A673 (cell line): ENCODE measurements at regions of chr15 and their contacts with region 1.

Region 1: DNA sequence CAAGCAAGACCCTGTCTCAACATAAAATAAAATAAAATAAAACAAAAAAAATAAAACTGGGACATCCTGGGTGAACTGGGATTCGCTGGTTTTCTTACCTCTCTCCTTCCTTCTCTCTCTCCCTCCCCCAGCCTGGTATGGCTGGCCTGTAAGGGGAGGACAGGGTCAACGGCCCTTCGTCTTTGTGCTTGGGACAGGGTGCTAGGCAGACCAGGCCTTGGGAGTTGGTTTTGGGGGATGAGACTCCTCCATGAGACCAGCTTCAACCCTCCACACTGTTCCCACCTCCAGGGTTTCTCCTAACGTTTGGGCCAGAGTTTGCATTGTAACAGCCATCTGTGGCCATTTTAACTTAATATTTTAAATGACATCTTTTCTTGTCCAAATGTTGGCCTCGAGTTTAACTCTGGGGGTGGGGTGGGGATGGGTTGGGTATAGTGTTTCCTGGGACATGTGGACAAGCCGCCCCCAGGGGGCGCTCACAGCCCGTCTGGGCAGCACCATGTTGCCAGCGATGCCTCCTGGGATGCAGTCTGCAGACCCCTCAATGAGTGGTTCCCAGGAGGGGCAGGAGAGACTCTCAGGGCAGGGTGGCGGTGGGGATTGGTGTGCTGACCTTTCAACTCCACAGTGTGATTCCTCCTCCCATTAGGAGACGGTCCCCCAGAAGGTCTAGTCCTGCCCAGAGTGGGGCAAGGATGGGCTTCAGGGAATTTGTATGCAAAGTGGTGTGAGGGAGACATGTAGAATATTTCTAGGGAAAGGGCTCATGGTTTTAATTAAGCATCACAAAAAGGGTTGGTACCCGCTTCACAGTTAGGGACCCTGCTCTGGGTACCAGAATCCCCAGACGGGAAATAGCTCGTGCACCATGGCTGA is 37.7 kb upstream of the LCTL start:
- DNase-seq: peak; percentile 84
- H3K4me3 ChIP-seq: no peak overlapping the region
- H3K27ac ChIP-seq: no peak overlapping the region
- H3K4me1 ChIP-seq: no peaks in the 10 kb centered on the region
- H3K27me3 ChIP-seq: no peaks in the 10 kb centered on the region
- CTCF ChIP-seq: peak; percentile 88

Region 2: GRCh38 chr15:66402761-66403284 is 200.7 kb before region 1 on chr15:
- CTCF ChIA-PET with region 1: interaction called, 10 read pairs
- POLR2A ChIA-PET with region 1: no interaction called
- intact Hi-C with region 1: no loop called
- DNase-seq: no peak
- H3K4me3 ChIP-seq: no peak overlapping the region
- H3K27ac ChIP-seq: no peak overlapping the region
- H3K4me1 ChIP-seq: peaks cover 28% of the 10 kb centered on the region
- H3K27me3 ChIP-seq: no peaks in the 10 kb centered on the region
- CTCF ChIP-seq: no peak

Region 3: DNA sequence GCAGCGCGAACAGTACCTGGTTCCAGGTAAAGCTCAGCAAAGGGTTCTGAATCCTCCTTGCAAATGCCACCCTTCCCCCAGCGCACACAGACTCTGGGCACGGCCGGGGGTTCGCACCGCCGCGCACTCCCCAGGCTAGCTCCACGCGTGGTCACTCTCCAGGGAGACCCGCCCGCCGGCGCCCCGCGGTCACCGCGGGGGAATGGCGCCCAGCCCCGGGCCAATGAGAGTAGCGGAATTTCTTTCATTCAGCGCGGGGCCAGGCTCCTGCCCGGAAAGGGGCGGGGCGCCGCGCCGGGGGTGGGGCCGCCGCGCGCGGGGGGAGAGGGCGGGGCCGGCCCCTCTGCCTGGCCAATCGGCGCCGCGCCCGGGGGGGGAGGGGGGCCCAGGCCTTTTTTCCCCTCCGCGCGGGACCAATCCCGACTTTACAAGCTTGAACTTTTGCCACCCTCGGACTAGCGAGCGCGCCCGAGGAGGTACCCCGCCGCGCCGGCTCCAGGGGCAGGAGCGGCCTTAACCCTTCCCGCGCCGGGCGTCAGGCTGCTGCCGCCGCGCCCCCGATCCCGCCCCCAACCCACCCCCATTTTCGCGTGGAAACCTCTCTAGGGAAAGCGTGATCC is 97.4 kb after region 1 on chr15:
- CTCF ChIA-PET with region 1: no interaction called
- POLR2A ChIA-PET with region 1: no interaction called
- intact Hi-C with region 1: loop called (anchors 5 kb)
- DNase-seq: peak; percentile 97
- H3K4me3 ChIP-seq: peak overlapping the region; percentile 63
- H3K27ac ChIP-seq: peak overlapping the region; percentile 82
- H3K4me1 ChIP-seq: peaks cover 26% of the 10 kb centered on the region
- H3K27me3 ChIP-seq: no peaks in the 10 kb centered on the region
- CTCF ChIP-seq: no peak

Region 4: DNA sequence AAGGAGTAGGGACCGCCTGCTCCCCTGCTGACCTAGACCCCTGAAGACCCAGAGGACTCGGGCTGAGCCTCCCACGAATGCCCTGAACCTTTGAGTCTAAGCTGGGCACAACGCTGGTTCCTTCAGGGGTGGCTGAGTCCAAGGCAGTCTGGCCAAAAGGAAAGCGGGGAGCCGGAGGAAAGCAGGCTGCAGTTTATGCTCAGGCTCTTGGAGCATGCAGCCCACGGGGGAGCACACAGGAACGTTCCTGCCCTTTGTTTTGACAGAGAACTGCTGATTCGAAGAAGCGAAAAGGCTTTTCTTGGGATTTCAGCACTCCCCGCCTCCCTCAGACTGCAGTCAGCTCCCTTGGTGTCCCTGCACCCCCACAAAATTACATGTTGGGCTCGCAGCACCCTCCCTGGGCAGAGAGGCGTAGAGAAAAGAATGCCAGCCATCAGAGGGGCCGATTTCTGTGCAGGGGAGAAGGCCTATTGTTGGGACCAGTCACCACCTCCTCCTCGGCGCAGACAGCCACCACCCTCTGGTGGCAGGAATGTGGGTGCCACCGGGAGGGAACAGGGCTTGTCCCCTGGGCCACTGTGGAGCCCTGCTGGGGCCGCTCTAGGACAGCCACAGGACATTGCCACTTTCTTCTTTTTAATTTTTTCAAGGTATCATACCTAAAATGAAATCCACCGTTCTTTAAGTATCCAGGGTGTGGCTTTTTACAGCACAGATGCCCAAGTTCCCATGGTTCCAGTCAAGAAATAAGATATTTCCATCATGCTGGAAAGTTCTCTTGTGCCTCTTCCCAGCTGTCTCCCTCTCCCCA is 170.7 kb after region 1 on chr15:
- CTCF ChIA-PET with region 1: no interaction called
- POLR2A ChIA-PET with region 1: no interaction called
- intact Hi-C with region 1: loop called (anchors 5 kb)
- DNase-seq: peak; percentile 93
- H3K4me3 ChIP-seq: no peak overlapping the region
- H3K27ac ChIP-seq: peak overlapping the region; percentile 78
- H3K4me1 ChIP-seq: peaks cover 55% of the 10 kb centered on the region
- H3K27me3 ChIP-seq: no peaks in the 10 kb centered on the region
- CTCF ChIP-seq: peak; percentile 97

Region 5: GRCh38 chr15:66851226-66852071 is 247.9 kb after region 1 on chr15:
- CTCF ChIA-PET with region 1: interaction called, 16 read pairs
- POLR2A ChIA-PET with region 1: no interaction called
- intact Hi-C with region 1: loop called (anchors 1 kb)
- DNase-seq: peak; percentile 92
- H3K4me3 ChIP-seq: no peak overlapping the region
- H3K27ac ChIP-seq: no peak overlapping the region
- H3K4me1 ChIP-seq: peaks cover 6% of the 10 kb centered on the region
- H3K27me3 ChIP-seq: no peaks in the 10 kb centered on the region
- CTCF ChIP-seq: peak; percentile 95

Region 6: DNA sequence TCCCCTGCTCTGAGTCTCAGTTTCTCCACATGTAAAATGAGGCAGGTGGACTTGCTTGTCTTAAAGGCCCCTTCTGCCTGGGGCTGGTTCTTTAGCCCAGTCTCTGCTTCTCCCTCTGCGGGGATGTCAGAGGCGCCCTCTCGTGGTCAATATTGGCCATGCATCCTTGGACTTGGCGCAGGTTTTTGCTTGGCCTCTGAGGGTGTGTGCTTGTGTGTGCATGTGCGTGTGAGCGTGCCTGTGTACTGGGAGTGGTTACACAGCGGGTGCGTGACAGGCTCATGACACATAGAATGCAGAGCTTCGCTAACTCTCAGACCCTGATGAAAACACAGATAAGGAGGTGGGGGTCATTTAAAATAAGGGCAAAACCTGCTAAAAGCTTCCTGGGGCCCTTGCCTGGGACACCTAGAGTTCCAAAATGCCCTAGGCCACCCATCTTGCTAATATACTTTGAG is 259.4 kb after region 1 on chr15:
- CTCF ChIA-PET with region 1: interaction called, 3 read pairs
- POLR2A ChIA-PET with region 1: no interaction called
- intact Hi-C with region 1: loop called (anchors 1 kb)
- DNase-seq: peak; percentile 89
- H3K4me3 ChIP-seq: no peak overlapping the region
- H3K27ac ChIP-seq: no peak overlapping the region
- H3K4me1 ChIP-seq: no peaks in the 10 kb centered on the region
- H3K27me3 ChIP-seq: no peaks in the 10 kb centered on the region
- CTCF ChIP-seq: peak; percentile 95